ENCODE measurements at regions of chr4 and their contacts with region 1.

Region 1: DNA sequence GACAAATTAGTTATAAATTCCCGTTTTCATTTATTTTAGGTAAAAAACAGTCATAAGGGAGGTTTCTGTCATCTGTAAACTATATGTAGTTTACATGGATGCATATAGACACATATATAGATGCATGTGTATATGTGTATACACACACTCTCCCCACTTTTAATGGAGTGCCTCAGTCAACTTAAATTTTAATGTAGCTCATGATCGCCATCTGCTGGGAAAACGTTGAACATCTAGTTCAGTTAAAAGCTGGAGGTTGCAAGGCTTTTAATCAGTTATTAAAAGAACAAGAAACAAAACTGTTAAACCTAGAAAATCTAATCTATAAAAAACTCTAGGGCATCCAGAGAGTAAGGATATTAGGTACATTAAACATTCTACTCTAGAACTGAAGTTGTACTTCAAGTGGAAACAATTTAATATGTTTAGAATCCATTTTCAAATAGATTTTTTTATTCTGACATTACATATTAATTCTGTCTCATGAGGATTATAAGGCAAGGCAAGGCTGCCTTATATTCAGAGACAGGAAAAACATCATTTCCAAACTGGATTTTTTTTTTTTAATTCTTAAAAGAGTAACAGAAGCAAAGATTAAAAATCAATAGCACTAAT is 122.6 kb downstream of the SHISA3 start:
- DNase-seq: peak; percentile 65
- ATAC-seq: peak; percentile 49
- H3K4me3 Mint-ChIP-seq: no peak overlapping the region
- H3K27ac Mint-ChIP-seq: no peak overlapping the region
- H3K4me1 Mint-ChIP-seq: peaks cover 2% of the 10 kb centered on the region
- H3K27me3 Mint-ChIP-seq: no peaks in the 10 kb centered on the region

Region 2: DNA sequence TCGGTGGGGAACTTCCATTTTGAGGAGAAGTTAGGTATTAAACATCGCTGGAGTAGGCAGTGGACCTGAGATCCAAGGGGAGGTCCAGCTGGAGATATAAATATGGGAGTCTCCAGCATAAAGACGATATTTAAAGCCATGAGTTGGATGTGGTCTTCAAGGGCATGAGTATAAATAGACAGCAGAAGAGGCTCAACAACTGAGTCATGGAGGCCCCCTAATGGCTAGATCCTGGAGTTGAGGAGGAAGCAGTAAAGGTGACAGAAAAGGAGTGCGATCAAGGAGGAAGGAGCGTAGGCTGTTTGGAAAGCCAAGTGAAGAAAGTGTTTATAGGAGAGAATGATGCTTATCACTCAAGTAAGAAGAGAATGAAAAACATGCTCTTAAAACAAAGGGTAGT is 1287.5 kb before region 1 on chr4:
- CTCF ChIA-PET with region 1: no interaction called
- POLR2A ChIA-PET with region 1: no interaction called
- intact Hi-C with region 1: no loop called
- DNase-seq: no peak
- ATAC-seq: no peak
- H3K4me3 Mint-ChIP-seq: no peak overlapping the region
- H3K27ac Mint-ChIP-seq: no peak overlapping the region
- H3K4me1 Mint-ChIP-seq: no peaks in the 10 kb centered on the region
- H3K27me3 Mint-ChIP-seq: peaks cover 4% of the 10 kb centered on the region

Region 3: GRCh38 chr4:41692717-41693345 is 827.1 kb before region 1 on chr4:
- CTCF ChIA-PET with region 1: no interaction called
- POLR2A ChIA-PET with region 1: no interaction called
- intact Hi-C with region 1: loop called (anchors 2 to 5 kb)
- DNase-seq: peak; percentile 67
- ATAC-seq: peak; percentile 58
- H3K4me3 Mint-ChIP-seq: no peak overlapping the region
- H3K27ac Mint-ChIP-seq: no peak overlapping the region
- H3K4me1 Mint-ChIP-seq: no peaks in the 10 kb centered on the region
- H3K27me3 Mint-ChIP-seq: peaks cover 10% of the 10 kb centered on the region

Region 4: GRCh38 chr4:41957634-41958033 is 562.3 kb before region 1 on chr4:
- CTCF ChIA-PET with region 1: interaction called, 3 read pairs
- POLR2A ChIA-PET with region 1: no interaction called
- intact Hi-C with region 1: loop called in 1 of 2 experiments (anchors 2 kb)
- DNase-seq: no peak
- ATAC-seq: no peak
- H3K4me3 Mint-ChIP-seq: no peak overlapping the region
- H3K27ac Mint-ChIP-seq: no peak overlapping the region
- H3K4me1 Mint-ChIP-seq: no peaks in the 10 kb centered on the region
- H3K27me3 Mint-ChIP-seq: no peaks in the 10 kb centered on the region

Region 5: GRCh38 chr4:42282081-42282901 is 237.6 kb before region 1 on chr4:
- CTCF ChIA-PET with region 1: interaction called, 56 read pairs
- POLR2A ChIA-PET with region 1: no interaction called
- intact Hi-C with region 1: loop called (anchors 1 to 2 kb)
- DNase-seq: peak; percentile 43
- ATAC-seq: peak; percentile 74
- H3K4me3 Mint-ChIP-seq: no peak overlapping the region
- H3K27ac Mint-ChIP-seq: no peak overlapping the region
- H3K4me1 Mint-ChIP-seq: peaks cover 5% of the 10 kb centered on the region
- H3K27me3 Mint-ChIP-seq: peaks cover 14% of the 10 kb centered on the region

Region 6: GRCh38 chr4:42371306-42372252 is 148.3 kb before region 1 on chr4:
- CTCF ChIA-PET with region 1: interaction called, 55 read pairs
- POLR2A ChIA-PET with region 1: no interaction called
- intact Hi-C with region 1: loop called (anchors 1 to 5 kb)
- DNase-seq: peak; percentile 10
- ATAC-seq: no peak
- H3K4me3 Mint-ChIP-seq: no peak overlapping the region
- H3K27ac Mint-ChIP-seq: no peak overlapping the region
- H3K4me1 Mint-ChIP-seq: no peaks in the 10 kb centered on the region
- H3K27me3 Mint-ChIP-seq: peaks cover 23% of the 10 kb centered on the region

Region 7: GRCh38 chr4:42501624-42502401 is 18.1 kb before region 1 on chr4:
- CTCF ChIA-PET with region 1: interaction called, 15 read pairs
- POLR2A ChIA-PET with region 1: no interaction called
- intact Hi-C with region 1: no loop called
- DNase-seq: no peak
- ATAC-seq: no peak
- H3K4me3 Mint-ChIP-seq: no peak overlapping the region
- H3K27ac Mint-ChIP-seq: no peak overlapping the region
- H3K4me1 Mint-ChIP-seq: no peaks in the 10 kb centered on the region
- H3K27me3 Mint-ChIP-seq: no peaks in the 10 kb centered on the region